ENCODE measurements at regions of chr10 and their contacts with region 1.

Region 1: GRCh38 chr10:22316285-22317120 is at the start of gene COMMD3:
- DNase-seq: peak; percentile 58
- ATAC-seq: peak; percentile 85
- H3K4me3 ChIP-seq: peak within 1 kb of the TSS; percentile 75 to 82 (median 78)
- H3K27ac ChIP-seq: peak within 1 kb of the TSS; percentile 92
- H3K4me1 ChIP-seq: peaks cover 35% of the 10 kb centered on the region
- H3K27me3 ChIP-seq: peaks cover 0 to 16% of the 10 kb centered on the region in 2 experiments; a peak in 2 of 5 replicates
- CTCF ChIP-seq: no peak
- EP300 ChIP-seq: no peak
- POLR2A ChIP-seq: peak; percentile 90 to 92
- RAD21 ChIP-seq: peak; percentile 11; the same call in 1 of the 2 replicates
- total RNA-seq, gene COMMD3: 54.4 and 56.8 TPM in 2 replicates

Region 2: DNA sequence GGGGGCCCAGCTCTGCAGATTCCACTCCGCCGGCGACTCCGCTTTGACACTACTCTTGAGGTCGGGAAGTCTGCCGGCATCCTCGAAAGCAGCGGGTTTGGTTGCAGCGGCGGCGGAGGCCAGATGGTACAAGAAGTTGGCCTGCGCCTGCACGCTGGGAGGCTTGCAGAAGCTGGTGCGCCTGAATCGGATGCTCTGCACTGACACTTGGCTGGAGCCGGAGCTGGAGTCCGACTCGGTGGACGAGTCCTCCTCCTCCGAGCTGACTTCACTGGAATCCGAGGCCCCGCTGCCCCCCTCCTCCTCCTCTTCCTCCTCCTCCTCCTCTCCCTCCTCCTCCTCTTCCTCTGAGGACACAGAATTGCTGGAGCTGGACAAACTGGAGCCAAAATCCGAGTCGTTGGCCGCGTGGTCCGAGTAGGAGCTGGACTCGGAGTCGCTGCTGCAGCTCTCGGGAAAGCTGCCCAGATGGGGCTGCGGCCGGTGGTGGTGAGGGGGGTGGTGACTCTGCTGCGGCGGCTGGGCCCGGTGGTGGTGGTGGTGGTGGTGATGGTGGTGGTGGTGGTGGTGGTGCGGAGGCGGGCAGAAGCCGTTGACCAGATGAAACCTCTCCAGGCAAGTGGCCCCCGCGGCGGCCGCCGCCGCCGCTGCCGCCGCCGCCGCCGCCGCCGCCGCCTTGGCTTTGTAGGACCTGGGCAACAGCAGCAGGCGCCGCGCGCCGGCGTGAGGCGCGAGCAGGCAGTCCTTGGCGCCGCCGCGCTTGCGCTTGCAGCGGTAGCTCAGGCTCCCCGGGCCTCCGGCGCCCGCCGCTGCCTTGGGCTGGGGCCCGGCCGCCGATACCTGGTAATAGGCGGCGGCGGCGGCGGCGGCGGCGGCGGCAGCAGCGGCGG is 800.0 kb before region 1 on chr10:
- CTCF ChIA-PET with region 1: no interaction called
- POLR2A ChIA-PET with region 1: no interaction called
- in situ Hi-C with region 1: loop called (anchors 25 kb)
- intact Hi-C with region 1: no loop called
- DNase-seq: no peak
- ATAC-seq: peak; percentile 77
- H3K4me3 ChIP-seq: peak overlapping the region; percentile 77 to 91 (median 80)
- H3K27ac ChIP-seq: peak overlapping the region; percentile 41
- H3K4me1 ChIP-seq: peaks cover 71% of the 10 kb centered on the region
- H3K27me3 ChIP-seq: no peaks in the 10 kb centered on the region; a peak in 1 of 5 replicates
- CTCF ChIP-seq: no peak
- EP300 ChIP-seq: no peak
- POLR2A ChIP-seq: no peak
- RAD21 ChIP-seq: peak; percentile 5

Region 3: GRCh38 chr10:22228943-22229801 is 87.3 kb before region 1 on chr10:
- CTCF ChIA-PET with region 1: no interaction called
- POLR2A ChIA-PET with region 1: interaction called, 32 read pairs
- in situ Hi-C with region 1: no loop called
- intact Hi-C with region 1: loop called (anchors 1 kb)
- DNase-seq: peak; percentile 80
- ATAC-seq: peak; percentile 97
- H3K4me3 ChIP-seq: peak overlapping the region; percentile 81 to 91 (median 81)
- H3K27ac ChIP-seq: peak overlapping the region; percentile 82
- H3K4me1 ChIP-seq: peaks cover 5% of the 10 kb centered on the region; the same call in 1 of the 2 replicates
- H3K27me3 ChIP-seq: peaks cover 0 to 14% of the 10 kb centered on the region in 2 experiments; a peak in 2 of 5 replicates
- CTCF ChIP-seq: no peak
- EP300 ChIP-seq: no peak
- POLR2A ChIP-seq: no peak
- RAD21 ChIP-seq: no peak

Region 4: DNA sequence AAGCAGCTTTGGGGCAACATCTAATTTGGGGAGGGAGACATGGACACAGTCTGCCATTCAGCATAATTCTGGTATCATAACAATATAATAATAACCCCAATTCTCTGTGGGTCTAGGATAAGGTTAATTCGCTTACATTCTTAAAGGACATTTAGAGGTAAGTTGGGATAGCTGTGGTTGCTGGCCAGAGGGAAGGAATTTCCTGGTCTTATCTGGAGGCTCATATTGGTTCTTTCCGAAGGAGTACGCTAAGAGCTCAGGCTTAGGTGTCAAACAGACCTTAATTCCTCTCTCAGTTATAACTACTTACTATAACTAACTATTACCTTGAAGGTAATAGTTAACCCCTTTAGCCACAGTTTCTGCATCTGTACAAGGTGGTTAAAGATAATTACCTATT is 97.6 kb after region 1 on chr10:
- CTCF ChIA-PET with region 1: no interaction called
- POLR2A ChIA-PET with region 1: no interaction called
- in situ Hi-C with region 1: no loop called
- intact Hi-C with region 1: no loop called
- DNase-seq: no peak
- ATAC-seq: no peak
- H3K4me3 ChIP-seq: no peak overlapping the region
- H3K27ac ChIP-seq: no peak overlapping the region
- H3K4me1 ChIP-seq: no peaks in the 10 kb centered on the region
- H3K27me3 ChIP-seq: peaks cover 0 to 7% of the 10 kb centered on the region in 2 experiments; a peak in 1 of 5 replicates
- CTCF ChIP-seq: no peak
- EP300 ChIP-seq: no peak
- POLR2A ChIP-seq: no peak
- RAD21 ChIP-seq: no peak

Region 5: DNA sequence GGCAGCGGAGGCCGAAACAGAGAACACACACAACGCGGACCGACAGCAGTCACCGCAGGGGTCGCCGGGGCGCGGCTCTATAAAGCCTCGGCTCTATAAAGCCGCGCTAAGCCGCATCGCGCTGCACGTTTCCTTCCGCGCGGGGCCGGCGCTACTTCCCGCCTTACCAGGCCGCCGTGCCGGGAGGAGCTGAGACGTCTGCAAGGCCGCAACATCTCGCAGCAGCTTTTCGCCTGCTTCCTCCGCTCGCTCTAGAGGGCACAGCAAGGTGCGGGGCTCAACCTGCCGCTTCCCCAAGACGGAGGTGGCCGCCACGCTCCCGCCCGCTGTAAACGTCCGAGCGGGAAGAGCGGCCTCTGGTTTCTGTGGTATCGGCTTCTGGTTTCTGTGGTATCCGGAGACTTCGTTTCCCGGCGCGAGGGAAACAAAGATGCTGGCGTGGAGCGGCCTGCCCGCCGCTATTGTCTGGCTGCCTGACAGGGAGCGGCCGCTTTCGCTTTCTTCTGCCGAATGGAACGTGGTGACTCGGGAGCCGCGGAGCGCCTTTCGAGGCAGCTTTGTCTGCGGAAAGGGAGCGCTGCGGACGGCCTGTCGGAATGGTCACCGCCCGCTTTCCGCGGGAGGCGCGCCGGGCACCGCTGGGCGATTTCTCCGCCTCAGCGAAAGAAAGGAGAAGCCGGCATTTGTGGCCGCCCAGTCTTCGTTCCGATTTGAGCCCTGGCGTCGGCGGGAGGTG is 120.5 kb after region 1 on chr10:
- CTCF ChIA-PET with region 1: no interaction called
- POLR2A ChIA-PET with region 1: no interaction called
- in situ Hi-C with region 1: no loop called
- intact Hi-C with region 1: loop called (anchors 5 kb)
- DNase-seq: peak; percentile 10
- ATAC-seq: peak; percentile 87
- H3K4me3 ChIP-seq: peak overlapping the region; percentile 57 to 74 (median 67)
- H3K27ac ChIP-seq: no peak overlapping the region
- H3K4me1 ChIP-seq: peaks cover 15% of the 10 kb centered on the region
- H3K27me3 ChIP-seq: peaks cover 0 to 16% of the 10 kb centered on the region in 2 experiments; a peak in 4 of 5 replicates
- CTCF ChIP-seq: no peak
- EP300 ChIP-seq: no peak
- POLR2A ChIP-seq: no peak
- RAD21 ChIP-seq: no peak

Region 6: GRCh38 chr10:22714479-22715289 is 398.2 kb after region 1 on chr10 and contains the start of gene PIP4K2A:
- CTCF ChIA-PET with region 1: no interaction called
- POLR2A ChIA-PET with region 1: no interaction called
- in situ Hi-C with region 1: loop called (anchors 25 kb)
- intact Hi-C with region 1: no loop called
- DNase-seq: peak; percentile 25
- ATAC-seq: peak; percentile 86
- H3K4me3 ChIP-seq: peak within 1 kb of the TSS; percentile 85 to 98 (median 87)
- H3K27ac ChIP-seq: peak within 1 kb of the TSS; percentile 54
- H3K4me1 ChIP-seq: peaks cover 41% of the 10 kb centered on the region
- H3K27me3 ChIP-seq: peaks cover 1 to 3% of the 10 kb centered on the region in 2 experiments; a peak in 3 of 5 replicates
- CTCF ChIP-seq: no peak
- EP300 ChIP-seq: no peak
- POLR2A ChIP-seq: 0 out of 4 replicates have a peak, but pooled peaks of 1 of the 2 experiments have one; percentile 51
- RAD21 ChIP-seq: 0 out of 2 replicates have a peak, but pooled peaks have one; percentile 17
- total RNA-seq, gene PIP4K2A: 22.6 and 25.7 TPM in 2 replicates